Panc1 (cell line): ENCODE measurements at regions of chr15 and their contacts with region 1.

Region 1: DNA sequence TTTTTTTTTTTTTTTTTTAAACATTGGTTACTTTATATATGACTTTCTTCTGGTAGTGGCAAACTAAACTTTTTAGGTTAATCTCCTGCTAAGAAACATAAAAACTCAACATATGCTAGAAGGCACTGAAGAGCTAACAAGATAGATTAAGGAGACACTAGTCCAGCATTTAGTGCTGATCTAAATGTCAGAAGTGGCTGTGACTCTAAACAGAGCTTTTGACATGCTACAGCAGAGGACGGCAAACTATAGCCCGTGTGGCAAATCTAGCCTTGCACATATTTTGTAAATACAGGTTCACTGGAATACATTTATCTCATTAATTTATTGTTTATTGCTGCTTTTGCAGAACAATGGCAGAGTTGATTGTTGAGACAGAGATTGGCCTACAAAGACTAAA is 20.6 kb downstream of the NR2E3 start:
- DNase-seq: no peak
- ATAC-seq: no peak
- H3K4me3 ChIP-seq: no peak overlapping the region
- H3K27ac ChIP-seq: no peak overlapping the region
- H3K4me1 ChIP-seq: no peaks in the 10 kb centered on the region
- H3K27me3 ChIP-seq: no peaks in the 10 kb centered on the region
- CTCF ChIP-seq: no peak

Region 2: DNA sequence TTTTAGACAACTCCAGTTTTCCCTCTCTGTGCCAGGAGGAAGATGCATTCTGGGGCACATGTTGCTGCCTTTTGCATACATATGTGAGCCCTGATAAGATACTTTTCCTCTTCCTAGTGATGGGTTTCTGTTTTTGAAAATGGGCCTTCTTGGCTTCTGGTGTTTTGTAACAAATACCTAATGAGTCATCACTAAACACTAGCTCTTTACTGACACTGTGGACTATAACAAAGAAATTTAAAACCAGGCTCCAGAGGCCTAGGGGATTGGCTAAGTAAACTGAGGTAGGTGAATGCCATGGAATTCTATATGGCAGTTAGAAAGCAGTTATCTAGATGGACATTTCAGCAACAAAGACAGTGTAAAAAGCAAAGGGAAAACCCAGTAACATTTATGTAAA is 114.0 kb before region 1 on chr15:
- CTCF ChIA-PET with region 1: no interaction called
- POLR2A ChIA-PET with region 1: no interaction called
- in situ Hi-C with region 1: no loop called
- intact Hi-C with region 1: no loop called
- DNase-seq: no peak
- ATAC-seq: no peak
- H3K4me3 ChIP-seq: no peak overlapping the region
- H3K27ac ChIP-seq: no peak overlapping the region
- H3K4me1 ChIP-seq: no peaks in the 10 kb centered on the region
- H3K27me3 ChIP-seq: no peaks in the 10 kb centered on the region
- CTCF ChIP-seq: no peak

Region 3: DNA sequence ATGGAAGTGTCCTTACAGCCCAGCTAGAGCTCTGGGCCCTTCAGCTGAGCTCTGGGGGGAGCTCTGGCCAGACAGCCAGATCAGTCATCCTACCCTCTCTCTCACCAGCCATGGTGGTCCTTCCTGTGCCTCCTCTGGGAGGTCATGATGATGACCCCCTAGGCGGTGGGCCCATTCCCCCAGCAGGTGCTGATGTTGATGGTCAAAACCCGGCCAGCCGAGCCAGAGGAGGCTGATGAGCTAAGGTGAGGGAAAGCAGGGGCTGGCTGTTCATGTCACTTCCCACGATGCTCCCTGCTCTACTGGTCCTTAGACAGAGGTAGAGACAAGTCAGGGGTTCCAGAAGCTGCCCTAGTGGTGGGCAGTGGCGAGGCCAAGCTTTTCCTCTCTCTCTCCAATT is 331.6 kb after region 1 on chr15:
- CTCF ChIA-PET with region 1: no interaction called
- POLR2A ChIA-PET with region 1: interaction called, 11 read pairs
- in situ Hi-C with region 1: no loop called
- intact Hi-C with region 1: no loop called
- DNase-seq: no peak
- ATAC-seq: no peak
- H3K4me3 ChIP-seq: no peak overlapping the region
- H3K27ac ChIP-seq: no peak overlapping the region
- H3K4me1 ChIP-seq: no peaks in the 10 kb centered on the region
- H3K27me3 ChIP-seq: no peaks in the 10 kb centered on the region
- CTCF ChIP-seq: no peak